H1 (cell line): ENCODE measurements at regions of chr9 and their contacts with region 1.

Region 1: GRCh38 chr9:134449221-134449894 is 123.1 kb downstream of the RXRA start:
- DNase-seq: peak; percentile 80 to 87
- H3K4me3 ChIP-seq: no peak overlapping the region
- H3K27ac ChIP-seq: no peak overlapping the region
- H3K4me1 ChIP-seq: peaks cover 0 to 3% (median 1%) of the 10 kb centered on the region in 4 experiments; a peak in 2 of 7 replicates
- H3K27me3 ChIP-seq: no peaks in the 10 kb centered on the region
- CTCF ChIP-seq: peak in 2 of 3 experiments; percentile 92 to 94; a peak in 3 of 4 replicates
- EP300 ChIP-seq: no peak
- POLR2A ChIP-seq: no peak
- RAD21 ChIP-seq: peak; percentile 97 to 99

Region 2: GRCh38 chr9:134178768-134179551 is 270.4 kb before region 1 on chr9:
- CTCF ChIA-PET with region 1: interaction called, 12 read pairs
- POLR2A ChIA-PET with region 1: no interaction called
- DNase-seq: no peak
- H3K4me3 ChIP-seq: no peak overlapping the region
- H3K27ac ChIP-seq: no peak overlapping the region
- H3K4me1 ChIP-seq: peaks cover 0 to 20% (median 12%) of the 10 kb centered on the region in 4 experiments; a peak in 6 of 7 replicates
- H3K27me3 ChIP-seq: no peaks in the 10 kb centered on the region
- CTCF ChIP-seq: no peak
- EP300 ChIP-seq: no peak
- POLR2A ChIP-seq: no peak
- RAD21 ChIP-seq: no peak

Region 3: GRCh38 chr9:134551650-134552348 is 102.4 kb after region 1 on chr9:
- CTCF ChIA-PET with region 1: interaction called, 15 read pairs
- POLR2A ChIA-PET with region 1: no interaction called
- DNase-seq: no peak
- H3K4me3 ChIP-seq: no peak overlapping the region
- H3K27ac ChIP-seq: no peak overlapping the region
- H3K4me1 ChIP-seq: peaks cover 0 to 6% (median under 1%) of the 10 kb centered on the region in 4 experiments; a peak in 3 of 7 replicates
- H3K27me3 ChIP-seq: no peaks in the 10 kb centered on the region
- CTCF ChIP-seq: no peak
- EP300 ChIP-seq: no peak
- POLR2A ChIP-seq: no peak
- RAD21 ChIP-seq: no peak

Region 4: GRCh38 chr9:134570151-134570621 is 120.8 kb after region 1 on chr9:
- CTCF ChIA-PET with region 1: interaction called, 11 read pairs
- POLR2A ChIA-PET with region 1: no interaction called
- DNase-seq: peak in 1 of 2 experiments; percentile 23
- H3K4me3 ChIP-seq: no peak overlapping the region
- H3K27ac ChIP-seq: no peak overlapping the region
- H3K4me1 ChIP-seq: no peaks in the 10 kb centered on the region
- H3K27me3 ChIP-seq: no peaks in the 10 kb centered on the region
- CTCF ChIP-seq: no peak
- EP300 ChIP-seq: no peak
- POLR2A ChIP-seq: no peak
- RAD21 ChIP-seq: no peak

Region 5: DNA sequence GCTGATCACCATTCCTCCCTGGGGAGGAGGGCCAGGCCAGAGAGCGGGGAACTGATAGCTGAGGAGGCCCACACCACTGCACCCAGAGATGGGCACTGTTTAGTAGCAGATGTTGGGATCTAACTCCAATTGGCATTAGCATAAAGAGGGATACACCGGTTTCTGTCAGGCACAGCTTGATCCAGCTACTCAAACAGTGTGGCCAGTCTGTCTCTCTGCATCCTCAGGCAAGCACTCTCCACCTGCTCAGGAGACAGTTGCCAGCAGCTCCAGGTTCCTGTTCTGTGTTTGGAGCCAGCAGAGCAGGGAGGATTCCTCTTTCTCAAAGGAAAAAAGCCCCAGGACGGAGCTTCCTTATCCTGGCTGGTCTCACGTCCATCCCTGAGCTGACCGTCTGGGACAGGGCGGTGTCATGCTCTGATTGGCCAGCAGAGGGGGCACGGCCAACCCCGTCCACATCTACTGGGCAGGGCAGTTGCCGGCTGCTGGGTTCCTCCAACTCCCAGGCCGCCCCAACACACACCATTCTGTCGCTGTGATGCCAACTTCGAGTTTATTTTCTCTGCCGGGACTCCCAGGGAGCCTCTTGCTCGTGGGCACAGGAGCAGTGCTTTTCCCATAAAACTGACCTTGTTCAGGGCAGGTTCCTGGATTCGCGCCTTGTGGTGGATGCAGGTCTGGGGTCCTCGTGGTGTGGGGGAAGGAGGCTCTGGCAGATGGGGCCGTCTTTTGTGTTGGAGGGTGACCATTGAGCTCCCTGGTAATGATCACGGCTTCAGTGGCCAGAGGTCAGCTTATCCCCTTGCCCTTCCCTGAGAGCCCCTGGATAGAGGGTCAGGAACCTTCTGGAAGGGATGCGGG is 240.2 kb after region 1 on chr9:
- CTCF ChIA-PET with region 1: interaction called, 15 read pairs
- POLR2A ChIA-PET with region 1: no interaction called
- DNase-seq: peak; percentile 21 to 90
- H3K4me3 ChIP-seq: no peak overlapping the region
- H3K27ac ChIP-seq: no peak overlapping the region
- H3K4me1 ChIP-seq: no peaks in the 10 kb centered on the region
- H3K27me3 ChIP-seq: no peaks in the 10 kb centered on the region
- CTCF ChIP-seq: peak in 2 of 3 experiments; percentile 73 to 88; a peak in 3 of 4 replicates
- EP300 ChIP-seq: no peak
- POLR2A ChIP-seq: no peak
- RAD21 ChIP-seq: peak; percentile 48 to 58